Cardiac septum (tissue), 1 donor: ENCODE measurements at regions of chr19 and their contacts with region 1.

Region 1: DNA sequence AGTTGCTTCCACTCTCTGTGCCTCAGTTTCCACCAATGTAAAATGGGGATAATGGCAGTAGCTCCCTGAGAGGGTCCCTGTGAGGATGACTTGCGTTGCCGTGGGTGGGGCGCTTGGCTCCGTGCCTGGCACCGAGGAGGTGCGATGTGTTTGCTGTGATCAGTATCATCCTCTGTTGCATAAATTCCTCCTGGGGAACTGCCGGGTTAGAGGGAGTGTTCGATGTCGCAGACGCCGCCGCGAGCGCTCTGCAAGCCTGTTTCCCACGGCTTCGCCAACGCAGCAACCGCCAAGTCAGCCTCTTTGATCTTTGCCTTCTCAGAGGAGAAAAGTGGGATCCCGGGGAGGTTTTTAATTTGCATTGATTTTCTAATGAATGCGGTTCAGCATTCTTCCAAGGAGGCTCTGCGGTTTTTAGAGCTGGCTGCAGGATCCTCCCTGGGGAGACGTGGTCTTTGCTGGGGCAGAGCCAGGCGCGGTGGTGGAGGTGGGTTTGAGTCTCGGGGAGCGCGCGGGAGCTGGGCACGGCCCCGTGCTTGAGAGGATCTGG is 7.6 kb downstream of the GPR32 start:
- DNase-seq: no peak

Region 2: GRCh38 chr19:50537762-50538230 is 240.0 kb before region 1 on chr19:
- intact Hi-C with region 1: loop called (anchors 5 kb)
- DNase-seq: no peak

Region 3: GRCh38 chr19:50705422-50706019 is 72.3 kb before region 1 on chr19:
- intact Hi-C with region 1: loop called (anchors 2 kb)
- DNase-seq: no peak